GM23248 (cell line): ENCODE measurements at regions of chr7 and their contacts with region 1.

Region 1: GRCh38 chr7:73342645-73343044 is 14.7 kb downstream of the FKBP6 start:
- DNase-seq: peak; percentile 64
- H3K4me3 ChIP-seq: 0 out of 2 replicates have a peak overlapping the region, but pooled peaks have one; percentile 3
- H3K27ac ChIP-seq: no peak overlapping the region
- H3K4me1 ChIP-seq: no peaks in the 10 kb centered on the region
- H3K27me3 ChIP-seq: peaks cover 35% of the 10 kb centered on the region

Region 2: GRCh38 chr7:73397521-73398281 is 55.1 kb after region 1 on chr7:
- in situ Hi-C with region 1: loop called (anchors 5 kb)
- DNase-seq: no peak
- H3K4me3 ChIP-seq: no peak overlapping the region
- H3K27ac ChIP-seq: no peak overlapping the region
- H3K4me1 ChIP-seq: no peaks in the 10 kb centered on the region
- H3K27me3 ChIP-seq: no peaks in the 10 kb centered on the region

Region 3: DNA sequence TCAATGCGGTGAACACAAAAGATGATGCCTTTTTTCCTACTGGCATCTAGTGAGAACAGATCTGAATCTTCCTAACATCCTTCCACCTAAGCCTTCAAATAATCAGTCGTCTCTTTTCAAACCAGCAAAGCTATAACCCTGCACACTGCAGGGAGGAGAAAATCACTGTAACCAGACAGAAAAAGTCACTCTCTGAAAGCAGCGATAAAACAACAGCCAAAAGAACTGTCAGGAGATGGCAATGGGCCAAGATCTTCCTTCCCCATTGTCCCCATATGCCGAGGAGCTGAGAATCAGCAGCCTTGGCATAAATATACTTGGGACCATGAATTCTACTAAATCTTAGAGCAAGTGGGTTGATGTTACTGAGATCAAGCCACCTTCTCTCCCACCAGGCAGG is 104.0 kb after region 1 on chr7:
- in situ Hi-C with region 1: loop called (anchors 10 kb)
- DNase-seq: no peak
- H3K4me3 ChIP-seq: no peak overlapping the region
- H3K27ac ChIP-seq: no peak overlapping the region
- H3K4me1 ChIP-seq: no peaks in the 10 kb centered on the region
- H3K27me3 ChIP-seq: no peaks in the 10 kb centered on the region

Region 4: GRCh38 chr7:73526896-73527821 is 184.5 kb after region 1 on chr7:
- in situ Hi-C with region 1: no loop called
- DNase-seq: no peak
- H3K4me3 ChIP-seq: no peak overlapping the region
- H3K27ac ChIP-seq: no peak overlapping the region
- H3K4me1 ChIP-seq: no peaks in the 10 kb centered on the region
- H3K27me3 ChIP-seq: no peaks in the 10 kb centered on the region

Region 5: DNA sequence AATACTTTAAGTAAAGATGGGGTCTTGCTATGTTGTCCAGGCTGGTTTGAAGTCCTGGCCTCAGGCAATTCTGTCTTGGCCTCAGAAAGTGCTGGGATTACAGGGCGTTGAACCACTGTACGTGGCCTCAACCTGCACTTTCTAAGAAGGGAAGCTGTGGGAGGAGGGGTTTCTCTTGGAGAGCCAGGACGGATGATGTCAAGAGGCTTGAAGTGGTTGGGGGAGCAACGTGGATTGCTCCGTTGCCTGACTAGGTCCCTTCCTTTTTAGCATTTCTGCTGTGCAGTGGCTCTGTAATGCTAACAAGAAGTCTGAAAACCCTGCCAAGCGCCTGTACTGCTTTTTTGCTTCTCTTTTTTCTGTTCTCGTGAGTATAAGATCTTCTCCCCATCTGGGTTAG is 348.0 kb after region 1 on chr7:
- in situ Hi-C with region 1: no loop called
- DNase-seq: no peak
- H3K4me3 ChIP-seq: no peak overlapping the region
- H3K27ac ChIP-seq: no peak overlapping the region
- H3K4me1 ChIP-seq: no peaks in the 10 kb centered on the region
- H3K27me3 ChIP-seq: no peaks in the 10 kb centered on the region

Region 6: GRCh38 chr7:74197449-74198124 is 854.9 kb after region 1 on chr7:
- in situ Hi-C with region 1: no loop called
- DNase-seq: no peak
- H3K4me3 ChIP-seq: no peak overlapping the region
- H3K27ac ChIP-seq: no peak overlapping the region
- H3K4me1 ChIP-seq: no peaks in the 10 kb centered on the region
- H3K27me3 ChIP-seq: no peaks in the 10 kb centered on the region